ENCODE measurements at regions of chr17 and their contacts with region 1.

Region 1: GRCh38 chr17:81871387-81872230 is 472 bp upstream of the ARHGDIA start:
- DNase-seq: peak; percentile 96
- ATAC-seq: peak; percentile 17
- H3K4me3 Mint-ChIP-seq: peak overlapping the region; percentile 82
- H3K27ac Mint-ChIP-seq: peak overlapping the region; percentile 93
- H3K4me1 Mint-ChIP-seq: peaks cover 37% of the 10 kb centered on the region
- H3K27me3 Mint-ChIP-seq: no peaks in the 10 kb centered on the region

Region 2: DNA sequence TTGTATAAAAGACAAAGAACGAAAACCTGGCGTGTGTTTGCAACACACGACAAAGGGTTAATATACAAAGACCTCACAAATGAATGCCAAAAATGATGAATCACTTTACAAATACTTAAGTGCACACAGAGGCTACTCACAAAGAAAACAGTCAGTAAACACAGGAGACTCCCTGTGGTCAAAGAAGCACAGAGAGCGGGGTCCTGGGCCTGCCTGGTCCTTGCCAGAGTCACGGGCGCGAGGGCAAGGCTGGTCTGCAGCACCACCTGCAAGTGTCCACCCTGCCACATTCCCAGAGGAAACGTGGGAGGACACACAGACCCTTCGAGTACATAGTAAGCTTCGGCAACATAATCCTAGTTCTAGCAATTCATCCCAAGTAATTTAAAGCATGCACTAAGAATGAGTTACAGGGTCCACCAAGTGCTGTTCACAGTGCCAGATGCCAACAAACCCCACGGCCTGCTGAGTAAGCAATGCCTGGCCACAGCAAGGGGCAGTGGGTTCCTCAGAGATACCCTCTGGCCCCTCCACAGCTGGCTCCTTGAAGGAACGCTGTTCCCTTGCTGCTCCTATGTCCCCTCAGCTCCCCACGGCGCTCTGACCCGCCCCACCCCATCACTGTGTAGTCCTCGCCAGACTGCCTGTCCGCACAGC is 294.9 kb before region 1 on chr17:
- CTCF ChIA-PET with region 1: no interaction called
- DNase-seq: no peak
- ATAC-seq: no peak
- H3K4me3 Mint-ChIP-seq: no peak overlapping the region
- H3K27ac Mint-ChIP-seq: no peak overlapping the region
- H3K4me1 Mint-ChIP-seq: no peaks in the 10 kb centered on the region
- H3K27me3 Mint-ChIP-seq: no peaks in the 10 kb centered on the region

Region 3: DNA sequence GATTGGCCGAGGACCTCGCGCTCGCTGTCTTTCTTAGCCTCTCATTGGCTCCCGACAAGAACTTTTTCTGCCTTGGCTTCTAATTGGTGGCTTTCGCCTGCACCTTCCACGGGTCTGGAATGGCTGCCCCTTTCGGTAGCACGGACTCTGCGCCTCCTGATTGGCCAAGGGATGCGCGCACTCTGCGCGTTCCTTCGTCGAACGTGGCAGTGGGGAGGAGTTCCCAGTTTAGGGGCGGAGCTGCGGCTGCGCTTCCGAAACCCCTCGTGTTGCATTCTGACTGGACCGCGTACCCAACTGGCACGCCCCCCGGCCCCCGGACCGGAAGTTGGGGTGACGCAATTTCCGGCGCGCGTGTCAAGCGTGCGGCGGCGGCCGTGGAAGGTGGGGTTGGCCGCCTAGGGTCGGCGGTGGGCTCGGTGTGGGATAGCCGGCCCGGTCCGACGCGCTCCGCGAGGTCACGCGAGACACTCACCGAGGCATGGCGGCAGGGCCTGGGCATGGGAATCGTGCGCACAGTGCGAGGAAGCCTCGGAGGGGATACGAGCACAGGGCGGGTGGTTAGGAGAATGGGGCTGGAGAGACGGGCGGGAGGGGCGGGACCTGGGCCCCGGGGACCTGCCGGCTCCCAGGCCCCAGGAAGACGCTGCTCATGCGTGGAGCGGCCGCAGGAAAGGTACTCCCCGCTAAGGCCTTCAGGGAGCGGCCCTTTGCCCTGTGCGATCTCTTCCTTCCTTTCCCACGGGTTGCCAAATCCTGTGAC is 10.7 kb before region 1 on chr17:
- CTCF ChIA-PET with region 1: interaction called, 16 read pairs
- DNase-seq: peak; percentile 100
- ATAC-seq: peak; percentile 88
- H3K4me3 Mint-ChIP-seq: peak overlapping the region; percentile 94
- H3K27ac Mint-ChIP-seq: peak overlapping the region; percentile 94
- H3K4me1 Mint-ChIP-seq: peaks cover 50% of the 10 kb centered on the region
- H3K27me3 Mint-ChIP-seq: no peaks in the 10 kb centered on the region

Region 4: DNA sequence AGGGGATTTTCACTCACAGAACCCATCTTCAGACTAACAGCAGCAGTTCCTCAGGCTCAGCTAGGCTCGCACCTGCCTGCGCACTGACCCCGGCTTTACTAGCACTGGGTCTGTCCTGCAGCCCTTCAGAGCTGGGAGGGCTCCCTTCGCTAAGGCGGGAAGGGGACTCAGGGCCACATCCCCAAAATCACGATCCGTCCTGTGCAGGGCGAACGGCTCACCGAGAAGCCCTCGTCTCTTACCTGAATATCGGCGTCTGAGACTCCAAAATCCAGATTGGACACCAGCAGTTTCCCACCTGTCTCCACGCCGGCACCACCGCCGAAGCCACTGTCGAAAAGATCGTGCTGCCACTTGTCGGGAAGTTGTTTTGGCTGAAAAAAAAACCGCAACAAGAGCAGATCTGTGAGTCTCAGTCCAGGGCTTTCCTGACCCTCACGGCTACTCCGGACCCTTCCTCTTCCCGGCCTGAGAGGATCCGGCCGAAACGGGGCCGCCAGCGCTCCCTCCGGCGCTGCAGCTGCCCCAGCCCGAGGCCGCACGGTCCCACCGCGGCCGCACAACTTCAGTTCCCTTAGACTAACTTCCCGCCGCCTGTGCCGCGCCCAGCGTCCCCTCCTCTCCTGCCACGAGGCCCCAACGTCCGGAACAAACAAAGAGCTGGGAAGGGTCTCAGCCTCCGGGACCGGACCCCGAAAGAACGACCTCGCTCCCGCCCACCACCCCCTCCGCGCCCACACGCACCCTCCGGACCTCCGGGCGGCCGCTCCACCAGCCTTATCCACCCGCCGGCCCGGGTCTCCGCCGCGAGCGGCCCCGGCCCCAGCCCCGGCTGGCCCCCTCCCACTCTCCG is 19.1 kb after region 1 on chr17:
- CTCF ChIA-PET with region 1: interaction called, 16 read pairs
- DNase-seq: no peak
- ATAC-seq: peak; percentile 5
- H3K4me3 Mint-ChIP-seq: peak overlapping the region; percentile 86
- H3K27ac Mint-ChIP-seq: peak overlapping the region; percentile 96
- H3K4me1 Mint-ChIP-seq: peaks cover 38% of the 10 kb centered on the region
- H3K27me3 Mint-ChIP-seq: no peaks in the 10 kb centered on the region

Region 5: GRCh38 chr17:81902023-81902652 is 30.5 kb after region 1 on chr17 and contains the start of gene NPB:
- CTCF ChIA-PET with region 1: no interaction called
- DNase-seq: no peak
- ATAC-seq: peak; percentile 59
- H3K4me3 Mint-ChIP-seq: no peak within 1 kb of the TSS
- H3K27ac Mint-ChIP-seq: no peak within 1 kb of the TSS
- H3K4me1 Mint-ChIP-seq: peaks cover 4% of the 10 kb centered on the region
- H3K27me3 Mint-ChIP-seq: peaks cover 10% of the 10 kb centered on the region
- total RNA-seq, gene NPB: 0.23 TPM in 1 of 2 experiments, not detected in the other